ENCODE measurements at regions of chr6 and their contacts with region 1.

Region 1: GRCh38 chr6:108874470-108875160 is 26.4 kb downstream of the ARMC2 start:
- DNase-seq: no peak
- ATAC-seq: no peak
- H3K4me3 ChIP-seq: no peak overlapping the region
- H3K27ac ChIP-seq: no peak overlapping the region
- H3K4me1 ChIP-seq: no peaks in the 10 kb centered on the region
- H3K27me3 ChIP-seq: no peaks in the 10 kb centered on the region
- CTCF ChIP-seq: no peak

Region 2: DNA sequence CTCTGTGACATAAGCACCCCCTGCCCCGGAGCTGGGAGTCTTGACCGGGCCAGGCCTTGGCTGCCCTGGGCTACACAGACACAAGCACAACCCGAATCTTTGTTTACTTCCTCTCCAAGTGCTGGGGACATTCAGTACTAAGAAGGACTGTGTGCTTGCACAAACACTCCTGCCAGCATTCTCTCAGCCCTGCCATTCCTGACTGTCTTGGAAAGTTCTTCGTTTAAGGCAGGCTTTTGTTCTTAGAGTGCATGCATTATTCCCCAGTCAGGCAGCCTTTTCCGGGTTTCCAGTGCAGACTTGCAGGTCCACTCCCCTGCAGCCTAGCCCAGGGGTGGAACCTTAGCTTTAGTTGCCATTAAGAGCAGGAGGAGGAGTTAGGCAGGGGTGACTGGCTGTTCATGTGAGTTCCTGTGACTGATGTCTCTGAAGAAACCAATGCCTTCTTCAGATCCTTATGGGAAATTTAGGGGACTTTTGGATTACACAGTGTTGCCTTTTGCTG is 285.3 kb before region 1 on chr6:
- CTCF ChIA-PET with region 1: no interaction called
- POLR2A ChIA-PET with region 1: no interaction called
- in situ Hi-C with region 1: no loop called
- intact Hi-C with region 1: no loop called
- DNase-seq: peak; percentile 15
- ATAC-seq: peak; percentile 81
- H3K4me3 ChIP-seq: no peak overlapping the region
- H3K27ac ChIP-seq: peak overlapping the region; percentile 5
- H3K4me1 ChIP-seq: peaks cover 46% of the 10 kb centered on the region
- H3K27me3 ChIP-seq: no peaks in the 10 kb centered on the region
- CTCF ChIP-seq: no peak

Region 3: DNA sequence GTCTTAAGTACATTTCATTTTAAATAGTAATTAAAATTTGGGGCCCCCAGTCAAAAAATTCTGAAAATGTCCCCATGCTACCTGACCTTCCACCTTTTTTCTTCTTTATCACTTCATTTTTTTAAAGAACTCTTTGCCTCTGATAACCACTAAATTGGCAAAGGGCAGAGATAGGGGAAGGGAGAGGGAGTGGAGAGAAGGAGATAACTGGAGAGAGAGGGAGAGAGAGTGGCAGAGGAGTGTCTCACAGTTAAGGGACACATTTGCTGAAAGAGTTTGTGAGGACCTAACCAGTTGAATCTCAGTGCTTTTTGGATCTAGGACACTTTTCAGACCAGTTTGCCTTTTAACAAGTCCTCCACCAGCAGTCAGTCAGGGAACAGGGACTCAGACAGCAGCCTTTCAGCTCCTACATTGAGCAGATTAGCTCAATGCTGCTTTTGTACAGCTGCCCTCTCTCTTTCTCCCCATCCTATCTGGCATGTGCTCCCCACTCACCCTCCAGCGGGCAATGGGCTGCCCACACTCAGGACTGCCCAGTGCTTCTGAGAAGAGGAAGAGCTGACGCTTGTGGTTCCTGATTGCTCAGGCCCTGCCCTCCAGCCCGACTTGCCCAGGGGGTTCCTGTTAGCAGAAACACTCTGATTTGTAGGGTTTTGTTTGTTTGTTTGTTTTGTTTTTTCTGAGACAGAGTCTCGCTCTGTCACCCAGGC is 12.0 kb before region 1 on chr6:
- CTCF ChIA-PET with region 1: no interaction called
- POLR2A ChIA-PET with region 1: interaction called, 12 read pairs
- in situ Hi-C with region 1: no loop called
- intact Hi-C with region 1: no loop called
- DNase-seq: no peak
- ATAC-seq: no peak
- H3K4me3 ChIP-seq: no peak overlapping the region
- H3K27ac ChIP-seq: no peak overlapping the region
- H3K4me1 ChIP-seq: no peaks in the 10 kb centered on the region
- H3K27me3 ChIP-seq: no peaks in the 10 kb centered on the region
- CTCF ChIP-seq: no peak